ENCODE measurements at regions of chr3 and their contacts with region 1.

Region 1: GRCh38 chr3:180523040-180523439 is 78.9 kb upstream of the TTC14 start:
- DNase-seq: no peak
- H3K4me3 ChIP-seq: no peak overlapping the region
- H3K27ac ChIP-seq: no peak overlapping the region
- H3K4me1 ChIP-seq: no peaks in the 10 kb centered on the region
- H3K27me3 ChIP-seq: no peaks in the 10 kb centered on the region
- CTCF ChIP-seq: no peak
- POLR2A ChIP-seq: no peak

Region 2: DNA sequence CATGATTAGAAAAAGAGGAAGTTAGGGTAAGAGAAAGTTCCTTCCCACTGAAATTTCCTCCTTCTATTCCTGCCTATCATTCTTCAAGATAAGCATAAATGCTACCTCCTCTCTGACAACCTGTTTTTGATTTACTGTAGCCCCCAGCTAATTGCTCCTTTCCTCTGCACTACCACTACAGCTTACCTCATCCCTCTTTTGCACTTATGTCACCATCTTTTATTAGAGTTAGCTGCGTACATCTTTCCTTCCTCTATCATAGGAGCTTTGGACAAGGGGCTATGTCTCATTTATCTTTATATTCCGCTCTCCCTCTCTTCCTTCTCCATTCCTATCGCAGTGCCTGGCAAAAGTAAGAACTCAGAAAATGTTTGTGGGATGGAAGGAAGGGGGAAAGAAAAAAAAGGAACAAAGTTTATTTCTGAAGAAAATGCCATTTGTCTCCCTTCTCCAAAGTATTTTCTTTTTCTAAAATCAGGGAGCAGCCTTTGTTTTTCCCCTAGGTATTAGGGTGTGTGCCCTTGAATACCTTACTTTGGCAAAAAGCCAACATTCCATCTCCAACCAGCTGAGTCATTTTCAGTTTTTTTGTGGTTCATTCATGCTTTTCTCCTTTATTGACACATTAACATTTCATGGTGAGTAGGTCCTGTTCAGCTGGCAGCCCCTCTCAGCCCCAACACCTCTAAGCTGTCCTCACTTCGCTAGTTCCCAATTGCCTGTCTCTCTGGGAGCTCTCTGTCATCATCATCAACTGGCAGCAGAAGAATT is 1101.1 kb after region 1 on chr3:
- intact Hi-C with region 1: loop called (anchors 5 kb)
- DNase-seq: no peak
- H3K4me3 ChIP-seq: no peak overlapping the region
- H3K27ac ChIP-seq: no peak overlapping the region
- H3K4me1 ChIP-seq: no peaks in the 10 kb centered on the region
- H3K27me3 ChIP-seq: no peaks in the 10 kb centered on the region
- CTCF ChIP-seq: no peak
- POLR2A ChIP-seq: no peak

Region 3: DNA sequence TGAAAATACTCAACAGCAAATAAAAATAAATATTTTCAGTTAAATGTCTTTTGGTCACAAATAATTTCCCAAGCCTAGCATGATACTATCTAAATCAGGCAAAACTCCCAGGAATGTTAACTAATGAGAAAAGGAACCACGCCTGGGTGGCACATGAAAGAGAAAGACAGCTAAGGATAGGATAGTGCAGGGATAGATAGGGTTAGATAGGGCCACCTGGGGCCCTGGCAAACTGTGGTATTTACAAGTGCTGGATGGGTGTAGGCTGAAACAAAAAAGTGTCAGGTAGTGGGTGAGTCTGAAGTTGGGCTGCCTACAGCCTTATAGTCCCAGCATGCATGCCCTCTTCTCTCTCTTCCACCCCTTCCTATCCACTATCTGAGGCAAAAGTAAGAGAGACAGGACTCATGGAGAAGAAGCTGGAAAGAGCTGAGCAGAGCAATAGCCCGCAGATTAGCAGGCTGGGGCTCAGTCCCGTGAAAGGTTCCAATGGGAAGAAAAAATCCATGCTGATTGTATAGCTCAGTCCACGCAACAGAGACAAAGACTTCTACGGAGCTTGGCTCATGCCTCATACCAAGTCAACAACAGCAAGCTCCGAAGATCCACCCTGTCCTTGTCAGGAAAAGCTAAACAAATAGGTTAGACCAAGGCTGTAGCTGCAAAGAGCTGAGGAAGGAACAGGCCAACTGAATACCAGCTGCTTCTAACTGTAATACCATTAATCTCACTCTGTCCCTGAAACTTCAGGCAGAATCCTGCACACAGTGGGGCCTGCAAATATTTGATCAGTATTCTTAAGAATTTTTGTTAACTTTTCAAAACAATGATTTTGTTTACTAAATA is 1928.1 kb after region 1 on chr3:
- intact Hi-C with region 1: no loop called
- DNase-seq: no peak
- H3K4me3 ChIP-seq: no peak overlapping the region
- H3K27ac ChIP-seq: no peak overlapping the region
- H3K4me1 ChIP-seq: no peaks in the 10 kb centered on the region
- H3K27me3 ChIP-seq: no peaks in the 10 kb centered on the region
- CTCF ChIP-seq: no peak
- POLR2A ChIP-seq: no peak